Left ventricle myocardium superior (tissue), 1 donor: ENCODE measurements at regions of chr16 and their contacts with region 1.

Region 1: DNA sequence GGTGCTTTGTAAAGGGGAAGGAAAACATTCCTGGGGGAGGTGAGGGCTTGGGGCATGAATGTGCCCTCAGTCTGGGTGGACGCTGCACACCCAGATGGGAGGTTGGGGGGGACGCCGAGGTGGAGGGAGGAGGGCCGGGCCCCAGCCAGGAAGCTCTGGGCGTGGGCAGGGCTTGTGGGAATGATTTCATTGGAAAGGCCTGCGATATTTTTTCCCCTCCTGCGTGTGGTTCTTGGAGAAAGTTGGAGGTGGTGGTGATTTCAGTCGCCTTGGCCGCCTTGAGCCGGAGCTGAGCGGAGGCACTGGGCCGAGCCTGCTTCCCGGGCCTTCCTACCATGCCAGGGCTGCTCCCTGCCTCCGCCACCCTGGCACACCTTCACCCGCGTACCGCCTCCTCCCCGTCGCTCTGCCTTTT is 26.4 kb upstream of the CLEC18A start:
- DNase-seq: peak; percentile 72
- ATAC-seq: peak; percentile 80

Region 2: DNA sequence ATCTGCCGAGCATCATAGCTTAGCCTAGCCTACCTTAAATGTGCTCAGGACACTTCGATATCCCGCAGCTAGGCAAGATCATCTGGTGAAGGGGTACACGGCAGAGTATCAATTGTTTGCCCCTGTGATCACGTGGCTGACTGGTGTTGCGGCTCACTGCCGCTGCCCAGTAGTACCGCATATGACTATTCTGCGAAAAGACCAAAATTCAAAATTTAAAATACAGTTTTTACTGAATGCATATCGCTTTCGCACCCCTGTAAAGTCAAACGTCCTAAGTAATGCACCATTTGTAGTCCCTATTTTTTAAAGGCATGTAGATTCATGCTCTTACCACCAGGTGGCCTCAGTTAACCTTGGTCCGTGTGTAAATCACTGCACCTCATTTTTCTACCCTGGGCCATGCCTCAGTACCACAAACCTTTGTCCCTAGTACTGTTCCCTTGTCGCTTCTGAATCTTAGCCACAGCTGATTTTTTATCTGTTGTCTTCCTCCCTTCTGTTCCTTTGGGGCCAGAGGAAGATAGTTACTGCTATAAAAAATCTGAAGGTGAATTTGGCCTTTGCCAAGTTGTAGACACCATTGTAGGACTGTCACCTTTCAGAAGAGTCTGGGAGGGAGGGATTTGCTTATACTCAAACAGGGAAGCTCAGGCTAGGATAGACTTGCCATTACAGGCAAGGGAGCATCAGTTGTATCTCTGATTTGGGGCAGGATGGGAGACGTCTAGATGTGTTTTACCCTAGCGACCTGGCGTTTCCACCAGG is 128.2 kb before region 1 on chr16:
- intact Hi-C with region 1: loop called (anchors 5 kb)
- DNase-seq: no peak
- ATAC-seq: peak; percentile 82